CD4-positive, alpha-beta memory T cell (primary cell): ENCODE measurements at regions of chr2 and their contacts with region 1.

Region 1: DNA sequence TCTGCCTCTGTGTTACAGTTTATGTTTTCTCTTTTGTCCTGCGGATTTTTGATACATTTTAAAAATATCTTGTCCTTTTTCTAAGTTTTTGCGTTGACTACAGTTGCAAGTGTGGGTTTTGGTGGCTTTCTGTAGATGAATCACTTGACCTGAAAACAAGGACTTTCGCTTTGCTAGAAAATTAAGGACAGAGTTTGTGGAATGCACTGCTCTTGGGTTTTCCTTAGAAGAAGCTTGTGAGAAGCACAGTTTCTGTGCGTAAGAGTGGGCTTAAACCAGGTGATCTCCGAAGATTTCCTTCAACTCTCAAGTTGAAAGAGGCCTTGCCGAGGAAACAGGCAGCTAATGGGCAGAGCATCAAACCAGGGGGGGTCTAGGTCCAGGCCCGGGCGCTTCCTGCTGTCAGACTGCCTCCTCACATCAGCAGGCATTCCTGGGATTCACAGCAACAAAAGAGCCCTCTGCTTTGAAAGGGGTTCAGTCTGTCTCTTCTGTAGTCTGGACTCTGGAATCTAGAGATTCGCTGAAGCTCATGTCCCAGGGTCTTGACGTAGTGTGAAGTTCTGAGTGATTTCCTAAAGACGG is 17.3 kb downstream of the NCK2 start:
- DNase-seq: no peak
- H3K4me3 ChIP-seq: peak overlapping the region; percentile 9 to 39
- H3K4me3 Mint-ChIP-seq: peak overlapping the region; percentile 26 to 87 (median 71)
- H3K27ac ChIP-seq: peak overlapping the region; percentile 53
- H3K27ac Mint-ChIP-seq: peak overlapping the region; percentile 61 to 93 (median 84)
- H3K4me1 ChIP-seq: peaks cover 100% of the 10 kb centered on the region
- H3K4me1 Mint-ChIP-seq: peaks cover 79 to 100% (median 91%) of the 10 kb centered on the region in 4 donors
- H3K27me3 ChIP-seq: no peaks in the 10 kb centered on the region
- H3K27me3 Mint-ChIP-seq: no peaks in the 10 kb centered on the region

Region 2: DNA sequence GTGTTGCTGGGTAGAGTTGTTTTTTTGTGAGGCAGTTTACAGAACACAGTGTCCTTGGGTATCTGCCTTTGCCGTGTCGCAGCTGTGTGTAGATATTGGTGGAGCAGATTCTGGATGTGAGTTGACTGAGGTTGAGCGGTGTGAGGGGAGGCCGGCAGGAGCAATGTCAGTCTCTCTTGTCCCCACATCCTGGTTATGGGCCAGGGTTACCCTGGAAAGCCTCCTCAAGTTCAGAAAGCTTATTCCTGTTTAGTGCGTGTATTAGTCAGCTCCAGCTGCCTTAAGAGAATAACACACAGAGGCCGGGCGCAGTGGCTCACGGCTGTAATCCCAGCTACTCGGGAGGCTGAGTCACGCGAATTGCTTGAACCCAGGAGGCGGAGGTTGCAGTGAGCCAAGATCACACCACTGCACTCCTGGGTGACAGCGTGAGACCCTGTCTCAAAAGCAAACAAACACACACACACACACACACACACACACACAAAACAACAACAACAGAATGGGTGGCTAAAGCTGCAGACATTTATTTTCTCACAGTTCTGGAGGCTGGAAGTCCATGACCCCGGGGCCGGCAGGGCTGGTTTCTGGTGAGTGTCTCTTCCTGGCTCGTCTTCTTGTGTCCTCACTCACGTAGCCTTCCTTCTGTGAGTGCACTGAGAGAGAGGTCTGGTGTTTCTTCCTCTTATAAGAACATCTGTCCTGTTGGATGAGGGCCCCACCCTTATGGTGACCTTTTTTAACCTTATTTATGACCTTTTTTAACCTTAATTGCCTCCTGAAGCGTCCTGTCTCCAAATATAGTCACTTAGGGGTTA is 12.2 kb before region 1 on chr2:
- CTCF ChIA-PET with region 1: interaction called, 8 read pairs
- POLR2A ChIA-PET with region 1: interaction called, 88 read pairs
- intact Hi-C with region 1: loop called (anchors 2 kb)
- DNase-seq: peak in 3 of 5 donors; percentile 32 to 63 (median 37)
- H3K4me3 ChIP-seq: peak overlapping the region; percentile 21 to 48
- H3K4me3 Mint-ChIP-seq: peak overlapping the region; percentile 88 to 99 (median 92)
- H3K27ac ChIP-seq: peak overlapping the region; percentile 78
- H3K27ac Mint-ChIP-seq: peak overlapping the region; percentile 92 to 99 (median 97)
- H3K4me1 ChIP-seq: peaks cover 81% of the 10 kb centered on the region
- H3K4me1 Mint-ChIP-seq: peaks cover 60 to 93% (median 75%) of the 10 kb centered on the region in 4 donors
- H3K27me3 ChIP-seq: no peaks in the 10 kb centered on the region
- H3K27me3 Mint-ChIP-seq: no peaks in the 10 kb centered on the region

Region 3: GRCh38 chr2:105775809-105776559 is 14.0 kb after region 1 on chr2:
- CTCF ChIA-PET with region 1: interaction called, 4 read pairs
- POLR2A ChIA-PET with region 1: interaction called, 38 read pairs
- intact Hi-C with region 1: loop called (anchors 2 kb)
- DNase-seq: peak in 3 of 5 donors; percentile 48 to 66 (median 48)
- H3K4me3 ChIP-seq: peak overlapping the region; percentile 3 to 55
- H3K4me3 Mint-ChIP-seq: peak overlapping the region; percentile 73 to 90 (median 82)
- H3K27ac ChIP-seq: peak overlapping the region; percentile 71
- H3K27ac Mint-ChIP-seq: peak overlapping the region; percentile 91 to 98 (median 97)
- H3K4me1 ChIP-seq: peaks cover 100% of the 10 kb centered on the region
- H3K4me1 Mint-ChIP-seq: peaks cover 76 to 98% (median 91%) of the 10 kb centered on the region in 4 donors
- H3K27me3 ChIP-seq: no peaks in the 10 kb centered on the region
- H3K27me3 Mint-ChIP-seq: no peaks in the 10 kb centered on the region

Region 4: DNA sequence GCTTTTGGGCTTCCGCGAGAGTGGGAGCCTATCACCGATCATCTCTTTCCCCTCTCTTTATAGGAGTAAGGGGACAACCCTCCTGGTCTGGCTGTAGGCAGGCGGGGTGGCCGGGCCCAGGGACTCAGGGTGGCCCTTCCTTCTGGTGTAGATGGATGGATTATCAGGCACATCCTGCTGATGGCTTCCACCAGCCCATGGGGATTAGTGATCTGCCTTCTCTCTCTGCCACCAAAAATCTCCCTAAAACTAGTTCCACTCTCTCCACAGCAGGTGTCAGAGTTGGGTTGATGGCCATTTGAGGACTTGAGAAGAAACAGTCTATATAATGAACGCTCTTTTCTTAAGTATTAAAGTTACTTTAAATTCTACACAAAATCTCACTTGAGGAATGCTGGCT is 20.1 kb after region 1 on chr2:
- CTCF ChIA-PET with region 1: interaction called, 45 read pairs
- POLR2A ChIA-PET with region 1: interaction called, 38 read pairs
- intact Hi-C with region 1: loop called (anchors 2 kb)
- DNase-seq: peak in 1 of 5 donors; percentile 48
- H3K4me3 ChIP-seq: no peak overlapping the region
- H3K4me3 Mint-ChIP-seq: peak overlapping the region; percentile 54 to 86 (median 75)
- H3K27ac ChIP-seq: peak overlapping the region; percentile 57
- H3K27ac Mint-ChIP-seq: peak overlapping the region; percentile 56 to 94 (median 86)
- H3K4me1 ChIP-seq: peaks cover 100% of the 10 kb centered on the region
- H3K4me1 Mint-ChIP-seq: peaks cover 81 to 98% (median 92%) of the 10 kb centered on the region in 4 donors
- H3K27me3 ChIP-seq: no peaks in the 10 kb centered on the region
- H3K27me3 Mint-ChIP-seq: no peaks in the 10 kb centered on the region